Common myeloid progenitor, CD34-positive (primary cell): ENCODE measurements at regions of chr1 and their contacts with region 1.

Region 1: DNA sequence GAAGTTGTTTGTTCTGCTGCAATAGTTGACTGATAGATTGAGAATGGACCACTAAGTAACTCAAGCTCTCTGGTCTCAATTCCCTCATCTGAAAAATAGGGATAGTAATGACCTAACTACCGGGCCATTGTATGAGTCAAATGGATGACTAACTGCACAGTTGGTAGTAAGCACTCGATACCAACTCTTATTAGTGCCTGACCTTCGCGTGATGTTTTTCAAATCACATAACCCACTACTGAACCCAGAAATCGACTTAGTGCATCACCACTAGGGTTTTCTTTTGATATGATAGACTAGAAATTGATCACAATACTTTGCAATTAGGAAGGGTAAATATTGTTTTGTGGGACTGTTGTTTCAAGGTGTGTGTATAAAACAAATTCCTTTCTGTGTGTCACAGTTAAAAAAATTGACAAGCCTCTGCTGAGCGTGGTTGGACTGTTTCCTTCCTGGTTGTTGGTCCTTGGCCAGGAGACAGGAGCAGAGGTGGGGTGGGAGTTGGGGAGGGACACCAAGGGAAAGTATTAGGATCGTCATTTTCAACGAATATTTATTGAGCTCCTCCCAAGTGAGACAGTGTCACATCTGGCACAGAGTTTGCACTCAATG is 54.0 kb upstream of the LRP8 start:
- DNase-seq: no peak
- H3K4me3 ChIP-seq: no peak overlapping the region
- H3K27ac ChIP-seq: no peak overlapping the region
- H3K4me1 ChIP-seq: peaks cover 0 to 10% (median 9%) of the 10 kb centered on the region in 4 experiments
- H3K27me3 ChIP-seq: no peaks in the 10 kb centered on the region

Region 2: DNA sequence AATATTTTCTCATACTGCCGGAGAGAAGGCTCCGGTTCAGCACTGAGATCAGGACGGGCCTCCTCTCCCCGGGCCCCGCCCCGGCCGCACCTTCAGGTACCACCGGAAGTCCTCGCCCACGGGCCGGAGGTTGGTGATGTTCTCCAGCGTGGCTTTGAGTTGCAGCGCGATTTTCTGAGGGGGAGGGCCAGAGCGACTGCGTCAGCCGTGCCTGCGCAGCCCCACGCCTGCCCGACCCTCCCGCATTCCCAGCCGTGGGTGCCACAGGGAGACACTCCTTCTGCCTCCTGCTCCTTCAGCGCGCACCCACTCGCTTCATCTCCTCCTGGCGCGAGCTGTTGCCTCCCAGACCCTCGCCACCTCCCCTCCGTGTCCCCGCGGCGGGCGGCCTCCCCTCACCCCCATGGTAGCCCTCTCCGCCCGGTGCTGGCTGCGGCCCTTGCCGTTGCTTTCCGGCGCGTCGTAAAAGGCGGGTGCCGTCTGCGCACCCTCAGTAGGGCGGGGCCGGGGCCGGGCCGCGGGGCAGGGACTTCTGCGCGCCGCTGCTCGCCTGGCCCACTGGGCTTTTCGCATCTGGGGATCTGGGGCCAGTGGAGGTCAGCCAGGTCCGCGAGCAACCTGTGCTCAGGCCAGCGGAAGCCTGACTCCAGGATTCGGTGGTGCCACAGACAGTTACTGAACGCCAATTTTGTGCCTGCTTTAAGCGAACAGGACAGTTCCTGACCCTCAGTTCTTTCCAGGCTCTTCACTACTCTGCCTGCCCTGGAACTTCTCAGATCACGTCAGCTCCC is 161.5 kb before region 1 on chr1 and contains the start of gene CZIB:
- CTCF ChIA-PET with region 1: no interaction called
- POLR2A ChIA-PET with region 1: no interaction called
- DNase-seq: peak; percentile 88 to 94 (median 92)
- H3K4me3 ChIP-seq: peak within 1 kb of the TSS; percentile 63 to 98 (median 89)
- H3K27ac ChIP-seq: peak within 1 kb of the TSS; percentile 74 to 89
- H3K4me1 ChIP-seq: peaks cover 8 to 16% (median 15%) of the 10 kb centered on the region in 4 experiments
- H3K27me3 ChIP-seq: no peaks in the 10 kb centered on the region

Region 3: DNA sequence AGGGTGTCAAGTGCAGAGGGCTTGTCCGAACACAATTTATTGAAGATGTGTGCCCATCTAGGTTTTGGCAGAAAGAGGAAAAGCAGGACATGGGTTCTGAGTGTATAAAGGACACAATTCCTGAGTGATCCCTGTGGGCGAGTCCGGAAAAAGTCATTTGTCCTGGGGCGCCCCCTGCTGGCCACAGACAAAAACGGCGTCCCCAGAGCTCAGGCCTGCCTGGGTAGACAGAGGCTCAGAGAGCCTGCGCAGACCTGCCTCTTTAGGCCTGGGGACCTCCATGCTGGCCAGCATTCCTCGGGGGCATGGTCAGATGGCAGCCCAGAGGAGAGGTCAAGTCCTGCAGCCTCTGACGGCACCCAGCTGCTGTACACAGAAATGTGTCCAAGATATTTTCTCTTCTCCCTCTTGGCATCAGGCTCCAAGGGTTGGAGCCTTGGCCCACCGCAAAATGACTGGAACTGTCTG is 11.5 kb after region 1 on chr1:
- CTCF ChIA-PET with region 1: interaction called, 12 read pairs
- POLR2A ChIA-PET with region 1: interaction called, 4 read pairs
- DNase-seq: peak; percentile 33 to 48 (median 37)
- H3K4me3 ChIP-seq: no peak overlapping the region
- H3K27ac ChIP-seq: no peak overlapping the region
- H3K4me1 ChIP-seq: peaks cover 0 to 15% (median 10%) of the 10 kb centered on the region in 4 experiments
- H3K27me3 ChIP-seq: no peaks in the 10 kb centered on the region